K562 (cell line): ENCODE measurements at regions of chr2 and their contacts with region 1.

Region 1: GRCh38 chr2:44348400-44348799 is 12.9 kb downstream of the PREPL start:
- DNase-seq: no peak
- ATAC-seq: no peak
- H3K4me3 ChIP-seq: no peak overlapping the region
- H3K27ac ChIP-seq: no peak overlapping the region
- H3K4me1 ChIP-seq: no peaks in the 10 kb centered on the region
- H3K27me3 ChIP-seq: no peaks in the 10 kb centered on the region
- CTCF ChIP-seq: no peak
- EP300 ChIP-seq: no peak
- POLR2A ChIP-seq: no peak
- RAD21 ChIP-seq: no peak

Region 2: DNA sequence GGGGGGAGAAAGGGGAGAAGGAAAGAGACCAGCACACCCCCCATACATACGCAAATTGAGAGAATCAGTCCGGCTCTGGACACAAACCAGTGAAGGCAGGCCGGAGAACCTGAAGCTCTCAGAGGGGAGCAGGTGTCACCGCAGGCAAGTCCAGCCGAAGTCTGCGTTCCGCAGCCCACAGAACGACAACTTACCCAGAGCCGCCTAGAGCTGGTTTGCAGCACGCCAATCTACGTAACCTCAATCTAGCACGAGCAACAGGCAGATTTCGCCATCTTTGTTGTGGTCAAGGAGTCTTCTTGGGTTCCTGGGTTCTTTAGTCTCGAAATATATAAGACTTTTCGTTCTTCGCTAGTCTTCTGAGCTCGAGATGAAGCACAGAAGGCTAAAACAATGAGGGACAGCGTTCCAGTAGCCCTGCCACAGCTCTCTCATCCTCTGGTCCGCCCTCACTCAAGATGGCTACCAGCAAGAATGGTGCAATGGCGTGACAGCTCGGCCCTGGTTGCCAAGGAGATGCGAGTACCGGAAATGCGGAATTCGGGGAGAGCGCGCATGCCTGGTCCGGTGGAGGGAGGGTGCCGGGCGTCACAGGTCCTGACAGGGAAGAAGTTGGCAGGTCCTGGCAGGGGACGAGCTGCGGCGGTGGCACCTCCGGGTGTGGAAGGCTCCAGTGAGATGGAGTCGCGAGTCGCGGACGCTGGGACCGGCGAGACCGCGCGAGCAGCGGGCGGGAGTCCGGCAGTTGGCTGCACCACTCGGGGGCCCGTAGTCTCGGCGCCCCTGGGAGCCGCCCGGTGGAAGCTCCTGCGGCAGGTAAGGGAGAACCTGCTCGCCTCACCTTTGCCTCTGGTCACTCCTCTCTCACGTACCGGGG is 13.2 kb after region 1 on chr2 and contains the starts of genes CAMKMT and PREPL:
- CTCF ChIA-PET with region 1: no interaction called
- POLR2A ChIA-PET with region 1: interaction called, 40 read pairs
- in situ Hi-C with region 1: no loop called
- intact Hi-C with region 1: no loop called
- DNase-seq: peak; percentile 97 to 99 (median 98)
- ATAC-seq: peak; percentile 93
- H3K4me3 ChIP-seq: peak within 1 kb of the TSS; percentile 80
- H3K27ac ChIP-seq: peak within 1 kb of the TSS; percentile 100
- H3K4me1 ChIP-seq: peaks cover 3 to 18% of the 10 kb centered on the region in 2 experiments; a peak in 3 of 5 replicates
- H3K27me3 ChIP-seq: no peaks in the 10 kb centered on the region
- CTCF ChIP-seq: no peak
- EP300 ChIP-seq: peak; percentile 33
- POLR2A ChIP-seq: peak; percentile 86
- RAD21 ChIP-seq: no peak
- polyA plus RNA-seq, gene CAMKMT: 1.6 to 1.8 TPM
- polyA plus RNA-seq, gene PREPL: 11.6 to 27.2 TPM